ENCODE measurements at regions of chr1 and their contacts with region 1.

Region 1: DNA sequence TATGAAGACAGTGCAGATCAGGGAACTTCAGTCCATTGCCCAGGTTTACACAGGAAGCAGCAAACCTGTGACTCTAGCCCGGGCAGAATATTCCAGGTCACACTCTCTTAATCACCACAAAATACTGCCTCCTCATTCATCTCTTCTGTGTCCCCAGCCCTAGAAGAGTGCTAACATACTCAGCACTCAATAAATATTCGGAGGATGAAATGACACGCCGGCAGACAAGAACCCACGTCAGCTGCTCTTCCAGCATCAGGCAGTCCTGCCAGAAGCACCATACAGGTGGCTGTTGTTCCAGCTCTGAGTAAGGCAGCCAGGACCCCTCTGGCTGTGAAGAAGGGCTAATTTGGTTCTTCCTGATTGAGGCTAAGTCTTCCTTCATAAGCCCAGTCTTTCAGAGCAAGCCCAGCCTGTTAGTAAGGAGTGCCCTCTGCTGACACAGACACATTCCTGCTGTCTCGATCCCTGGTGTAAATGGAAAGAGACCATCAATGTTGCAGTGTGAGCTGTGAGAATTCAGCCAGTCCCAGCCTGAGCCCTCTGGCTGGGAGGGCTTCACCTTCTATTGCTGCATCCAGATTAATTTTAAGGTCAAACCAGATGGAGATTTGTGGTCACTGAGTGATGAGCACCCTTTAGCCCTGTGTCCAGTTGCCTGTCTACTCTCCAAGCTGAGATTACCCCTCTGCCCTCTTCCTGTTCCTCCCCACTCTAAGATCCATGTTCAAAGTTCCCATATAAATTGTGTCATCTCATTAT is 45.0 kb upstream of the KIRREL1 start:
- DNase-seq: peak in 2 of 10 donors; percentile 37 to 48
- H3K4me3 ChIP-seq: no peak overlapping the region
- H3K27ac ChIP-seq: no peak overlapping the region
- H3K27me3 ChIP-seq: peaks cover 0 to 21% (median 0%) of the 10 kb centered on the region in 45 donors
- CTCF ChIP-seq: peak in 54 of 56 donors; percentile 14 to 68 (median 46)

Region 2: DNA sequence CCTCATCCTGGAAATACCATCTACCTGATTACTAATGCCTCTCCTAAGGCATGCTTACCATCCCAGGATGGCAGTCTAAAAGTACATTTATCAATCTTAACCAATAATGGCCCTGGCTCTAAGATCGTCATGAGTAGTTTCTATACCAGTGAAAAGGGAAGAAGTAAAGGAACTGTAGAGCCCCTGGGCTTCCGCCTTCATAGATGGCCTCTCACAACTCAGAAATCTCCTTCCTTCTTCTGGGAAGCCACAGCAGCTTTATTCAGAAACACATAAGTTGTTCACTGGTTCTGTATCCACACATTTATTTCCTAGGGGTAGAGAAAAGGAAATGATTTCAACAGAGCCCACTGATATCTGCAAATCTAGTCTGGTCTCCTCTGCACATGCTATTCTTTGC is 65.9 kb before region 1 on chr1:
- intact Hi-C with region 1: loop called in 1 of 2 experiments (anchors 5 kb)
- DNase-seq: no peak
- H3K4me3 ChIP-seq: no peak overlapping the region
- H3K27ac ChIP-seq: no peak overlapping the region
- H3K27me3 ChIP-seq: peaks cover 0 to 21% (median 0%) of the 10 kb centered on the region in 45 donors
- CTCF ChIP-seq: no peak